ENCODE measurements at regions of chr7 and their contacts with region 1.

Region 1: GRCh38 chr7:92528188-92528957 is at the starts of genes PEX1 and RBM48:
- DNase-seq: peak; percentile 99
- ATAC-seq: peak; percentile 97
- H3K4me3 ChIP-seq: peak within 1 kb of the TSS; percentile 99
- H3K27ac ChIP-seq: peak within 1 kb of the TSS; percentile 99
- H3K4me1 ChIP-seq: peaks cover 11% of the 10 kb centered on the region
- H3K27me3 ChIP-seq: no peaks in the 10 kb centered on the region
- CTCF ChIP-seq: peak; percentile 83
- total RNA-seq, gene PEX1: 13.9 TPM
- total RNA-seq, gene RBM48: 10.1 TPM

Region 2: GRCh38 chr7:92615861-92616260 is 87.5 kb after region 1 on chr7:
- CTCF ChIA-PET with region 1: interaction called, 3 read pairs
- POLR2A ChIA-PET with region 1: interaction called, 16 read pairs
- in situ Hi-C with region 1: no loop called
- intact Hi-C with region 1: no loop called
- DNase-seq: no peak
- ATAC-seq: no peak
- H3K4me3 ChIP-seq: no peak overlapping the region
- H3K27ac ChIP-seq: no peak overlapping the region
- H3K4me1 ChIP-seq: peaks cover 1% of the 10 kb centered on the region; the same call in 1 of the 2 replicates
- H3K27me3 ChIP-seq: no peaks in the 10 kb centered on the region
- CTCF ChIP-seq: 0 out of 2 replicates have a peak, but pooled peaks have one; percentile 14

Measured in Panc1 (cell line).